ENCODE measurements at regions of chr6 and their contacts with region 1.

Region 1: DNA sequence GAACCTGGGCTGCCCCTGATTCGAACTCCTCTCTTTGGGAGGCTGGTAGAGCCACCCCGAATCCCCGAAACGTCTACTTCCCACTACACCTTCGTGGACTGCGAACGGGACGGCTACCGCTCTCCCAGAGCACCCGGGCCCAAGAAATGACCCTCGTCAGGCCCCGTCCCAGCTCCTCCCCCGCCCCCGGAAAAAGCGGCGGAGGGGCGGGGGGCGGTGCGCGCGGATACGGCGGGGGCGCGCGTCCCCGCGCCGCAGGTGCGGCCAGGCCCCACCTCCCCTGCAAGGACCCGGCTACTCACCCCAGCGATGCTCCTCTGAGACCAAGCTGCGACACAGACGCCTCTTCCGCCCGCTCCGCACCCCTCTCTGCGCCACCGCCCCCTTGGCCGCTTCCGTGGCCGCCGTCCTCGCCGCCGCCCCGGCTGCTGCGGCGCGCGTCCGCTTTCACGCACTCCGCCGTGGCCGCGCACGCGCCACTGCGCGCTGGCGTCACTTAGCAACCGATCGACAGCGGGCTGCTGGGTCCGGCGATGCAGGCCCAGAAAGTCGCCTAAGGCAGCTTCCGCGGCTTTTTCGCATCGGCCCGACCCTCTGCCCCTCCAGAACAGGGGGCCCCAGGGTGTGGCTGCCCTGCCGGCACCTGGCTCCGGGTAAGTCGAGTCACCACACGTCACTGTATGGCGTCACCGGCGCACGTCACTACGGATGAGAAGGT is at the start of gene BTBD9:
- DNase-seq: peak; percentile 36
- H3K4me3 ChIP-seq: peak within 1 kb of the TSS; percentile 89
- H3K27ac ChIP-seq: peak within 1 kb of the TSS; percentile 90
- H3K27me3 ChIP-seq: no peaks in the 10 kb centered on the region
- CTCF ChIP-seq: no peak
- polyA plus RNA-seq, gene BTBD9: 7.2 and 7.5 TPM in 2 replicates

Region 2: DNA sequence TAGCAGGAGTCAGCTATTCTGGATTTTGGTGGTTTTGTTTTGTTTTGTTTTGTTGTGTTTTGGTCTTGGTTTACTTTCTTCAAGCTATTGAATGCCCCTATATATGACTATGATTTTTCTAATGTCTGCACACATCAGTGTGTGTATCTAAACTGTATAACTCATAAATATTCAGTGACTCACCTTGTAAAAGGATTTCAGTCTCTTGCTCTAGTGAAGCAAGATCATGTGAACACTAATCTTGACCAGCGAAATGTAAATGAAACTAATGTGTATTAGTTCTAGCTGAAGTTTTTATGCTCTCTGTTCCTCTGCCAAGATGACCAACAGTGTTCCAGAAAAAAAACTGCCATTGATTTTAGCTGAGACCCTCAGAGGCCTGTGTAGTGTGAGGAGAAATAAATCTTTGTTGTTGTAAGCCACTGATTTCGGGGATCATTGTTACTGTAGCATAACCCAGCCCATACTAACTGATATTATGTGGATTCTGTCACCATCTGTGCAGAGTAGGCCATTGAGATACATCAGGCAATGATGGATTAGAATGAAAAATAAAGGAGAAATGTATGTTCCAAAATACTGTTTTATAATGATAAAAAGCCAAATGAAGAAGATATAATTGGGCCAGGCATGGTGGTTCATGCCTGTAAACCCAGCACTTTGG is 11.6 kb after region 1 on chr6:
- CTCF ChIA-PET with region 1: no interaction called
- POLR2A ChIA-PET with region 1: interaction called, 11 read pairs
- DNase-seq: no peak
- H3K4me3 ChIP-seq: no peak overlapping the region
- H3K27ac ChIP-seq: no peak overlapping the region
- H3K27me3 ChIP-seq: no peaks in the 10 kb centered on the region
- CTCF ChIP-seq: no peak